Calu3 (cell line): ENCODE measurements at regions of chr2 and their contacts with region 1.

Region 1: GRCh38 chr2:31457651-31458050 is 43.1 kb upstream of the XDH start:
- DNase-seq: no peak
- H3K4me3 Mint-ChIP-seq: no peak overlapping the region
- H3K27ac Mint-ChIP-seq: no peak overlapping the region
- H3K4me1 Mint-ChIP-seq: no peaks in the 10 kb centered on the region
- H3K27me3 Mint-ChIP-seq: peaks cover 29% of the 10 kb centered on the region
- CTCF ChIP-seq: no peak

Region 2: GRCh38 chr2:30947686-30948085 is 510.0 kb before region 1 on chr2:
- CTCF ChIA-PET with region 1: no interaction called
- intact Hi-C with region 1: no loop called
- DNase-seq: no peak
- H3K4me3 Mint-ChIP-seq: no peak overlapping the region
- H3K27ac Mint-ChIP-seq: no peak overlapping the region
- H3K4me1 Mint-ChIP-seq: no peaks in the 10 kb centered on the region
- H3K27me3 Mint-ChIP-seq: no peaks in the 10 kb centered on the region
- CTCF ChIP-seq: no peak

Region 3: GRCh38 chr2:31547485-31547884 is 89.8 kb after region 1 on chr2:
- CTCF ChIA-PET with region 1: no interaction called
- intact Hi-C with region 1: no loop called
- DNase-seq: no peak
- H3K4me3 Mint-ChIP-seq: no peak overlapping the region
- H3K27ac Mint-ChIP-seq: no peak overlapping the region
- H3K4me1 Mint-ChIP-seq: no peaks in the 10 kb centered on the region
- H3K27me3 Mint-ChIP-seq: peaks cover 14% of the 10 kb centered on the region
- CTCF ChIP-seq: no peak

Region 4: GRCh38 chr2:32124660-32125059 is 667.0 kb after region 1 on chr2:
- CTCF ChIA-PET with region 1: interaction called, 12 read pairs
- intact Hi-C with region 1: no loop called
- DNase-seq: no peak
- H3K4me3 Mint-ChIP-seq: no peak overlapping the region
- H3K27ac Mint-ChIP-seq: no peak overlapping the region
- H3K4me1 Mint-ChIP-seq: peaks cover 13% of the 10 kb centered on the region
- H3K27me3 Mint-ChIP-seq: no peaks in the 10 kb centered on the region
- CTCF ChIP-seq: no peak